Heart right ventricle (tissue), 16 donors: ENCODE measurements at regions of chr12 and their contacts with region 1.

Region 1: DNA sequence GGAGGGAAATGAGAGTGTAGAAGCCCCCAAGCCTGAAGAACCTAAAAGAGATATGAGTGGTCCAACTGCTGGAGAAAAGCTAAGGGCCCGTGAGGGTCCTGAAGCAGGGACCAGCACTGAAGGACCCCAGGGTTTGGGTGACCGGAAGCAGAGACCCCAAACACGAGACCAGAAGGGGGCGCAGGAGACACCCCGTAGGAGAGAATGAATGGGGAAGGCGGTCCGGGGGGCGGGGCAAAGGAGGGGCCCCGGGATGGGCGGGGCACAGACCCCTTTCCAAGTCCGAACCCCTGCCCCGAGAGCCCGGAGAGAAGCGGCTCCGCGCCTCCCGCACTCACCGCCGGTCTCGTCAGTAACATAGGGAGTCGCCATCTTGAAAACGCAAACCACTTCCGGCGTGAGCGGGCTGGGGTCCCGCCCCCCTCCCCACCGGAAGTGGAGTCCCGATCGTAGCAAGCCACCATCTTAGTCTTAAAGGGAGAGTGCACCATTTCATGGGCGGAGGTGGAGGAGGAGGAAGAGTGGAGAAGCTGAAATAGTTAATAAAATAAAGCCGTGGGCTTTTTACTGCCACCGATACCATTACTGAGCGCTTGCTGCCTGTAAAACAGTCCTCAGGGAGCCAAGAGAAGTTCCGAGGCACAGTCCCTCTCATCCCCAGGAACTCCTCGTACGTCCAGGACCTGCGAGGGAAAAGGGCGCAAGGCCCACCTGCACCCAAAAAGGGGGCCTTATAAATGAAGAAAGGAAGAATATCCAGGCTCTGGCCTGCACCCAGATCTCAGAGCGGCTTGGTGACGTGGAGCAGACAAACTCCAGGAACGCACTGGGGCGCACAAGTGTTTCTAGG is 731 bp downstream of the PYM1 start:
- DNase-seq: peak; percentile 84 to 91
- ATAC-seq: peak; percentile 87 to 93 (median 92)
- H3K4me3 ChIP-seq: peak overlapping the region; percentile 69 to 100 (median 85)
- H3K27ac ChIP-seq: peak overlapping the region; percentile 88 to 99 (median 96)
- H3K4me1 ChIP-seq: peaks cover 4 to 57% (median 37%) of the 10 kb centered on the region in 9 donors
- H3K27me3 ChIP-seq: no peaks in the 10 kb centered on the region
- CTCF ChIP-seq: peak; percentile 50 to 92 (median 79)

Region 2: DNA sequence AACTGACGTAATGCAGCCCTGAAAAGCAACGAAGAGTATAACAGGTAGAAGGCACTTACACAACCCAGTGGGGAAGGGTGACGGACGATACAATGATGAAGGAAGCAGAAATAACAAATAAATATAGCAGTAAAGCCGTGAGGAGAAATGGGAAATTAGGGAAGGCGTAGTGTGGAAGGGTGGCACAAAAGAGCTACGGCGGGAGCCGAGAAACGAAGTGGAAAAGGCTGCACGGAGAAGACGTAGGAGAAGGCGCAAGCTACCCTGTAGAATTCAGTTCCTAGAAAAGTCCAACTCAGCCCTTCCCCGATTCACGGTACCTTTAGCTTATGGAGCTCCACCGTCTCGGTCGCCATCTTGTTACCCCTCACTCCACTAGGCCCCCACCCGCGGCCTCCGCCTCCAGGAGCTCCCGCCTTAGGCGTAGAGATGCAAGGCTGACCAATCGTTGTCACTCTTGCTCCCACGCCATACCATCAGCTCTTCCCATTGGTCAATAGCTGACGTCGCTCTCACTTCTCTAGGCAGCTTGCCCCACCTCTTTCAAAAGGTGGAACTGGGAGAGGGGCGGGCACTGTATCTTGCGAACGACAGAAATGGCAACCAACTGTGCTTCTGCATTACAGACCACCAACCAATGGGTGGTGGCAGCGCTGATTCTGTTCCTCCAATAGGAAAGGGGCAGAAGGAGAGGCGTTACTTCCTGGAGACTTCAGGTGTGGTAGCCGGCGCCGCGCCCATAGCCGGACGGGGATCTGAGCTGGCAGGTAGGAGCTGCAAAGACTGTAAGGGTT is 109.4 kb before region 1 on chr12 and contains the starts of genes ORMDL2 and SARNP:
- intact Hi-C with region 1: loop called in 2 of 10 experiments (anchors 5 to 10 kb)
- DNase-seq: peak; percentile 92 to 99
- ATAC-seq: peak; percentile 98 to 99 (median 99)
- H3K4me3 ChIP-seq: peak within 1 kb of the TSS; percentile 57 to 89 (median 76)
- H3K27ac ChIP-seq: peak within 1 kb of the TSS; percentile 45 to 96 (median 84)
- H3K4me1 ChIP-seq: peaks cover 4 to 54% (median 37%) of the 10 kb centered on the region in 9 donors
- H3K27me3 ChIP-seq: no peaks in the 10 kb centered on the region
- CTCF ChIP-seq: no peak
- total RNA-seq, gene ORMDL2: 10.3 to 36.9 (median 17.4) TPM
- total RNA-seq, gene SARNP: 47.5 to 58.0 (median 53.2) TPM

Region 3: DNA sequence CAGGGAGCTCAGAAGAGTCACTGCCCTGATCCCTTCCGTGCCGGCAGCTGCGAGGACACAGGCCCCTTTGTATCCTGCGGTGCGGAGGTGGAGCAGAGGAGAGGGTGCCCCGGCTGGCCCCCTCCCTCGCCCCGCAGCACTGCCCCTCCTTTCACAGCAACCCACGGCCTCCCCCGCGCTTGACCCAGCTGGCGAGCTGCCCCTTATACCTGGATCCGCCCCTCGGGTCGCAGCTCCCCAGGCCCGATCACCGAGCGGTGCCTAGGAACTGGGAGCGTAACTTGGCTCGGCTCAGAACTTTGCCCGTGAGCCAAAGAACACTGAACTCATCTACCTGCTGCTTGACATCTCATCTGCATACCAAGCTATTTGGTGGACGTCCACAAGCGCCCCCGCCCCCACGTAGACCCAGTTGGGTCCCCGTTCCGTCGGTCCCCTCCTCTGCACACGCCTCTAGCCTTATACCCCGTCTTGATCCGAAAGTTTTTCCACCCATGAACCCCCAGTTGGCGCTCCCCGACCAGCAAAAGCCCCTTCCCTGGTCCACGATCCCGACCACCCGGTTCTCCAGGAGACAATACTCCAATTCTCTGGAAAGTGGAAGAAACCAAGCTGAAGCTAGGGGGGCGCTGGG is 96.9 kb before region 1 on chr12:
- intact Hi-C with region 1: loop called (anchors 1 to 10 kb)
- DNase-seq: peak; percentile 44 to 62
- ATAC-seq: peak; percentile 28 to 65 (median 34)
- H3K4me3 ChIP-seq: peak overlapping the region; percentile 63 to 98 (median 85)
- H3K27ac ChIP-seq: peak overlapping the region; percentile 85 to 96 (median 92)
- H3K4me1 ChIP-seq: peaks cover 10 to 57% (median 50%) of the 10 kb centered on the region in 9 donors
- H3K27me3 ChIP-seq: no peaks in the 10 kb centered on the region
- CTCF ChIP-seq: no peak

Region 4: GRCh38 chr12:55847603-55848291 is 79.2 kb before region 1 on chr12:
- intact Hi-C with region 1: loop called in 3 of 10 experiments (anchors 2 to 5 kb)
- DNase-seq: peak; percentile 84 to 92
- ATAC-seq: peak; percentile 93 to 98 (median 96)
- H3K4me3 ChIP-seq: peak overlapping the region in 7 of 10 donors; percentile 8 to 40 (median 27)
- H3K27ac ChIP-seq: peak overlapping the region; percentile 81 to 96 (median 89)
- H3K4me1 ChIP-seq: peaks cover 0 to 60% (median 19%) of the 10 kb centered on the region in 9 donors
- H3K27me3 ChIP-seq: peaks cover 0 to 5% (median 0%) of the 10 kb centered on the region in 7 donors
- CTCF ChIP-seq: no peak

Region 5: GRCh38 chr12:55973598-55974307 is 46.8 kb after region 1 on chr12 and contains the start of gene RAB5B:
- intact Hi-C with region 1: loop called in 3 of 10 experiments (anchors 1 to 5 kb)
- DNase-seq: peak; percentile 97 to 100
- ATAC-seq: peak; percentile 92 to 96 (median 94)
- H3K4me3 ChIP-seq: peak within 1 kb of the TSS; percentile 79 to 100 (median 96)
- H3K27ac ChIP-seq: peak within 1 kb of the TSS; percentile 94 to 99 (median 96)
- H3K4me1 ChIP-seq: peaks cover 2 to 49% (median 42%) of the 10 kb centered on the region in 9 donors
- H3K27me3 ChIP-seq: no peaks in the 10 kb centered on the region
- CTCF ChIP-seq: peak in 5 of 9 donors; percentile 11 to 69 (median 30)
- total RNA-seq, gene RAB5B: 107 to 137 (median 122) TPM

Region 6: DNA sequence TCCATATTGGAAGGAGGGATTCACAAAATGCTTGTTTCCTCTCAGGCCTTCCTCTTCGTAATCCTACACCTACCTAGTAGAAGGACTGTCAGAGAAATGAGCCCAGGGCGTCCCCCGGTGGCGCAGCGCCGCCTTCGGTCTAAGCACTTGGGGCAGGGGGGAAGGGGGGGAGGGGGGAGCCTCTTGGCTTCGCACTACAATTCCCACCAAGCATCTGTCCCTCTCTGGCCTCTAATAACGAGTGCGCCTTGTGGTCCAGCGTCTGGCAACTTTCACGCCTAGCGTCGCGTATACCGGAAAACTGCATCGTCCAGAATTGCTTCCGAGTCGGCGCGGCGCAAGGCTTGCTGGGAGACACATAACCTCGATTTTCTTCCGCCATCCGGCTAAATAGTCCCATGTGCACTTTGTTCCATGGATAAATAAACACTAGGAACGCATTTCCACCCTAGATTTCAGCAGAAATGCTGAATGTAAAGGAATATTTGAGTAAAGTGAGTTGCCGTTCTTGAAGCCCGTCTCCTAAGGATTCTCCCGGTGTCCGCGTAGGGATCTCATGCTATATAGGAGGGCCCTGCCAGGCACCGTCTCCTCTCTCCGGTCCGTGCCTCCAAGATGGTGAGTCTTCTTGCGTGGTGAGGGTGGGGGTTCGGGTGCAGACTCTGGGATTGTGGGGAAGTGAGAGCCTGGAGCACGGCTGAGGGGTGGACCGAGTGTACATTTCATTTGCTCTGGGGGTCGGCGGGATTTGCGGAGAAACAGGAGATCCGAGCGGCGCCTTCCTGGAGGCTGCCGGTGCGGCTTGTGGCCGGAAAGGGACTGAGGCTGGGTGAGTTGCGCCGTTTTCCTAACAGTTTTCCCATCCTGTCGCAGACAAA is 114.8 kb after region 1 on chr12 and contains the start of gene RPS26:
- intact Hi-C with region 1: loop called in 4 of 10 experiments (anchors 1 to 10 kb)
- DNase-seq: peak; percentile 94 to 98
- ATAC-seq: peak; percentile 95 to 99 (median 97)
- H3K4me3 ChIP-seq: peak within 1 kb of the TSS; percentile 57 to 96 (median 80)
- H3K27ac ChIP-seq: peak within 1 kb of the TSS; percentile 92 to 99 (median 97)
- H3K4me1 ChIP-seq: peaks cover 0 to 23% (median 18%) of the 10 kb centered on the region in 9 donors
- H3K27me3 ChIP-seq: no peaks in the 10 kb centered on the region
- CTCF ChIP-seq: peak in 8 of 9 donors; percentile 34 to 69 (median 54)
- total RNA-seq, gene RPS26: 6.9 to 39.6 (median 19.3) TPM

Region 7: GRCh38 chr12:56079665-56080555 is 152.9 kb after region 1 on chr12 and contains the start of gene ERBB3:
- intact Hi-C with region 1: no loop called
- DNase-seq: peak; percentile 32 to 57
- ATAC-seq: peak; percentile 61 to 91 (median 76)
- H3K4me3 ChIP-seq: peak within 1 kb of the TSS; percentile 19 to 70 (median 56)
- H3K27ac ChIP-seq: peak within 1 kb of the TSS in 9 of 10 donors; percentile 3 to 55 (median 41)
- H3K4me1 ChIP-seq: peaks cover 0 to 23% (median 18%) of the 10 kb centered on the region in 9 donors
- H3K27me3 ChIP-seq: peaks cover 0 to 32% (median 9%) of the 10 kb centered on the region in 7 donors
- CTCF ChIP-seq: no peak
- total RNA-seq, gene ERBB3: 0.80 to 6.1 (median 2.9) TPM